Activated CD4-positive, alpha-beta memory T cell treated with anti-CD3 and anti-CD28 coated beads for 36 hours (primary cell): ENCODE measurements at regions of chr21 and their contacts with region 1.

Region 1: GRCh38 chr21:42818328-42818749 is 61.0 kb downstream of the WDR4 start:
- DNase-seq: peak; percentile 73
- H3K4me3 Mint-ChIP-seq: no peak overlapping the region
- H3K27ac Mint-ChIP-seq: no peak overlapping the region
- H3K4me1 Mint-ChIP-seq: no peaks in the 10 kb centered on the region
- H3K27me3 Mint-ChIP-seq: peaks cover 5% of the 10 kb centered on the region

Region 2: GRCh38 chr21:42621819-42622177 is 196.5 kb before region 1 on chr21:
- CTCF ChIA-PET with region 1: no interaction called
- POLR2A ChIA-PET with region 1: no interaction called
- intact Hi-C with region 1: no loop called
- DNase-seq: no peak
- H3K4me3 Mint-ChIP-seq: no peak overlapping the region
- H3K27ac Mint-ChIP-seq: no peak overlapping the region
- H3K4me1 Mint-ChIP-seq: no peaks in the 10 kb centered on the region
- H3K27me3 Mint-ChIP-seq: peaks cover 5% of the 10 kb centered on the region

Region 3: GRCh38 chr21:42652527-42653230 is 165.7 kb before region 1 on chr21:
- CTCF ChIA-PET with region 1: interaction called, 8 read pairs
- POLR2A ChIA-PET with region 1: no interaction called
- intact Hi-C with region 1: loop called (anchors 5 kb)
- DNase-seq: no peak
- H3K4me3 Mint-ChIP-seq: peak overlapping the region; percentile 70
- H3K27ac Mint-ChIP-seq: no peak overlapping the region
- H3K4me1 Mint-ChIP-seq: peaks cover 11% of the 10 kb centered on the region
- H3K27me3 Mint-ChIP-seq: peaks cover 14% of the 10 kb centered on the region

Region 4: DNA sequence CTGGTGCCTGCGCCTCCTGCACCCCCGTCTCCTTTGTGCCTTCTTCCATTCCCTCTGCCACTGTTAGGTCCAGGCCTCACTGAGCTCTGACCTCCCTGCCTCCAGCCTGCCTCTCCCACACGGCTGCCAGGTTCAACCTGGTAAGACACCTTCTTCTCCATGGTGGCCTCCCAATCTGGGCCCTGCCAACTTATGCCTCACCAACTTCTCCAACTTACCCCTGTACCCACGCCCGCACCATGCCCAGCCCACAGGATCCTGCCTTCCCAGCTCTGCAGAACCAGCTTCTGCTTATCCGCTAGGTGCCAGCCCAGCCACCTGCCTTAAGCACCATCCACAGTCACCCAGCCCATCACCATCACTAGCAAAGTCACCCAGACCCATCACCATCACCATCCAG is 127.8 kb before region 1 on chr21:
- CTCF ChIA-PET with region 1: no interaction called
- POLR2A ChIA-PET with region 1: no interaction called
- intact Hi-C with region 1: no loop called
- DNase-seq: no peak
- H3K4me3 Mint-ChIP-seq: no peak overlapping the region
- H3K27ac Mint-ChIP-seq: no peak overlapping the region
- H3K4me1 Mint-ChIP-seq: no peaks in the 10 kb centered on the region
- H3K27me3 Mint-ChIP-seq: no peaks in the 10 kb centered on the region